ENCODE measurements at regions of chr1 and their contacts with region 1.

Region 1: GRCh38 chr1:159780583-159781582 is at the start of gene DUSP23:
- ATAC-seq: peak; percentile 94 to 99 (median 98)
- H3K4me3 ChIP-seq: peak within 1 kb of the TSS; percentile 38 to 49 (median 43)
- H3K27ac ChIP-seq: peak within 1 kb of the TSS in 1 of 2 donors; percentile 4
- H3K4me1 ChIP-seq: no peaks in the 10 kb centered on the region
- total RNA-seq, gene DUSP23: 5.6 to 29.4 (median 11.8) TPM

Region 2: DNA sequence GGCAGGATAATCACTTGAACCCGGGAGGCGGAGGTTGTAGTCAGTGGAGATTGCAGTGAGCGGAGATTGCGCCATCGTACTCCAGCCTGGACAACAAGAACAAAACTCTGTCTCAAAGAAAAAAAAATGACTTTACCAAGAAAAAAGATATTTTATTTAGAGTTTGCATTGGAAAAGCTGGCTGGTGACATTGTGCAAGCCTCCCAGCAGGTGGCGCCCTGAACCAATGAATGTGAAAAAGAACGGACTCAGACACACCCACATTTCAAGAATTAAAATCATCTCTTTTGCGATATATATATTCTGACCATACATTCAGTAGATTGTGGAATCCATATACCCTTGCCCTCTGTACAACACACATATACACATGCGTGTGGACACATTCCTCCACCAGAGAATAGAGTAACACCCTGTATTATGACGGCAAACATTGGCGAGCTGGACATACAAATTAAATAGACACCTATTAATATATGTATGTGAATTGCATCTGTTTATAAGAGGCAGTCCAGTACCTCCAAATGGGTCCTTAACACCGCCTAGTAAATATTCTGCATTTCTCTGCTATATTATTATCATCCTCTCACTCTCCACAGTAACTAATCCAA is 648.5 kb before region 1 on chr1:
- in situ Hi-C with region 1: loop called in 1 of 9 experiments (anchors 25 kb)
- ATAC-seq: peak in 6 of 8 experiments; percentile 26 to 56 (median 52)
- H3K4me3 ChIP-seq: no peak overlapping the region
- H3K27ac ChIP-seq: no peak overlapping the region
- H3K4me1 ChIP-seq: no peaks in the 10 kb centered on the region

Region 3: GRCh38 chr1:159891275-159892157 is 110.6 kb after region 1 on chr1:
- in situ Hi-C with region 1: loop called in 2 of 9 experiments (anchors 25 kb)
- ATAC-seq: peak; percentile 91 to 100 (median 96)
- H3K4me3 ChIP-seq: no peak overlapping the region
- H3K27ac ChIP-seq: no peak overlapping the region
- H3K4me1 ChIP-seq: no peaks in the 10 kb centered on the region

Region 4: DNA sequence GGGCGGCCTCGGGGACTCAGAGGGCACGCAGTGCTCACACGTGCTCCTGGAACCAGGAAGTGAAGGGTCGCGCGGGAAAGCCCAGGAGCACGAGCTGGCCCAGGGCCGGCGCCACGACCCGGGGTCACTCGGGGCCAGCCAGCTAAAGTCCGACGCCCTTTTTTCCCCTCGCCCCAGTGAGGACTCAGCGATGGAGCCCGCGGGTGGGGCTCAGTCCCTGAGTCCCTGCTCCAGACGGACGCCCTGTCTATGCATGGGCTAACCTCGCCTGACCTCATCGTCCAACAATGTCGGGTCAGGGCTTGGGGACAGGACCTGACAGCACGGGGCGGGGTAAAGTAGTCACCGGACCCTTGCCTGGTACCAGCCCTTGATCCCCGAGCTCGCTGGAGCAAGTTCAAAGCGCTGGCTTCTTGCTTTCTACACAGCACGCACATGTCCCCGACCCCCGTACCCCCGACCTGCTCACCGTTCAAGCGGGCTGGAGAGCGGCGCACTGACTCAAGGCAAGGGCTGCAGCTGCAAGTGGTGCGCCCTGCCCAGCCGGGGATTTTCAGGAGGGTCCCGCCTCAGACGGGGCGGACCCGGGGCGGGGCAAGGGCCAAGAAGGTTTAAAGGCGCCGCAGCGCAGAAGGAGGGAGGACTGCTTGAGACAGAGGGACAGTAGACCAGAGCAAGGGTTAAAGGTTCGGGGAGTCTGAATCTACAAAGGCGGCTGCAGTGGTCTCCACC is 144.3 kb after region 1 on chr1 and contains the start of gene TAGLN2:
- in situ Hi-C with region 1: loop called in 1 of 9 experiments (anchors 25 kb)
- ATAC-seq: peak; percentile 44 to 78 (median 74)
- H3K4me3 ChIP-seq: peak within 1 kb of the TSS; percentile 24 to 43 (median 40)
- H3K27ac ChIP-seq: peak within 1 kb of the TSS in 1 of 2 donors; percentile 12
- H3K4me1 ChIP-seq: peaks cover 23 to 31% of the 10 kb centered on the region in 2 donors
- total RNA-seq, gene TAGLN2: 9.4 to 296 (median 93.0) TPM

Region 5: GRCh38 chr1:159991513-159991912 is 210.6 kb after region 1 on chr1:
- in situ Hi-C with region 1: loop called in 1 of 9 experiments (anchors 25 kb)
- ATAC-seq: peak in 1 of 8 experiments; percentile 50
- H3K4me3 ChIP-seq: no peak overlapping the region
- H3K27ac ChIP-seq: no peak overlapping the region
- H3K4me1 ChIP-seq: peaks cover 0 to 4% of the 10 kb centered on the region in 2 donors

Region 6: GRCh38 chr1:160006312-160006940 is 225.5 kb after region 1 on chr1:
- in situ Hi-C with region 1: loop called in 3 of 9 experiments (anchors 25 kb)
- ATAC-seq: peak; percentile 60 to 92 (median 76)
- H3K4me3 ChIP-seq: no peak overlapping the region
- H3K27ac ChIP-seq: no peak overlapping the region
- H3K4me1 ChIP-seq: peaks cover 16 to 22% of the 10 kb centered on the region in 2 donors